CD4-positive, alpha-beta T cell (primary cell): ENCODE measurements at regions of chr1 and their contacts with region 1.

Region 1: DNA sequence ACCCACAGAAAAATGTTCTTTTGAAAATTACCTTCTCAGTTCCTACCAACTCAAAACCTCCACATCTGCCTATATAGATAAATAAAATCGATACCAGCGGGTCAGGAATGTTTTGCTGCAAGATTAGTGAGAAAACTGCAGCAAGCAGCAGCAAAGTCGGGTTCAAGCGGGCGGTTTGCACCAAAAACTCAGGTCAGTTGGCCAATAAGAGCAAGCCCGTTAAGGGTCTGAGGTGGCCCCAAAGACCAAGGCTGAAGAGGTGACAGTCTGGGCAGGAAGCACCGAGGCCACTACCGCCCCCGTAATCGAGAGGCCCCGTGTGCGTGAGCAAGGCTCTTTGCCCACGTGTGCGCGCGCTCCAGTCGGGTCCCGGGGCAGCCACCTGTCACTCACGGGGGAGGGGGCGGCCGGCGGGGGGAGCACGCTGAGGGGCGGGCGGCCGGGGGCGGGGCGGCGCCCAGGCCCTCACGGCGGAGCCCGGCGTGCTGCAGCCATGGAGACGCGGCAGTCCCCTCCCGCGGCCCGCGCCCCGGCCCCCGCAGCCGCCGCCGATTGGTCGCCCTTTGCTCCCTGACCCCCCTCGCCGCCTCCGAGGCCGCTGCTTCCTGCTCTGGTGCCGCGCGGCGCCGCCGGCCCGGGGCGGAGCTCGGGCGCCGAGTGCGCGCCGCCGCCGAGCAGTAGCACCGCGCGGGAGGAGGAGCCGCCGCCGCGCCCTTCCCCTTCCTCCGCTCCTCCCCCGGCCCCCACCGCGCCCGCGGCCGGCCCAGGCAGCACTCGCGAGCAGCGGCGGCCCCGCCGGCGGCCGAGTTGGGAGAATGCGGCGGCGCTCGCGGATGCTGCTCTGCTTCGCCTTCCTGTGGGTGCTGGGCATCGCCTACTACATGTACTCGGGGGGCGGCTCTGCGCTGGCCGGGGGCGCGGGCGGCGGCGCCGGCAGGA is at the start of gene GALNT2:
- DNase-seq: peak; percentile 74 to 97 (median 86)
- ATAC-seq: peak; percentile 91
- H3K4me3 ChIP-seq: peak within 1 kb of the TSS; percentile 85
- H3K4me3 Mint-ChIP-seq: peak within 1 kb of the TSS; percentile 97
- H3K27ac ChIP-seq: peak within 1 kb of the TSS; percentile 46 to 73
- H3K27ac Mint-ChIP-seq: peak within 1 kb of the TSS; percentile 93
- H3K4me1 ChIP-seq: peaks cover 15% of the 10 kb centered on the region
- H3K4me1 Mint-ChIP-seq: peaks cover 42% of the 10 kb centered on the region
- H3K27me3 ChIP-seq: no peaks in the 10 kb centered on the region
- H3K27me3 Mint-ChIP-seq: no peaks in the 10 kb centered on the region
- CTCF ChIP-seq: no peak
- total RNA-seq, gene GALNT2: 11.0 to 11.4 TPM

Region 2: GRCh38 chr1:229507951-229508822 is 558.5 kb before region 1 on chr1 and contains the start of gene NUP133:
- CTCF ChIA-PET with region 1: no interaction called
- POLR2A ChIA-PET with region 1: no interaction called
- intact Hi-C with region 1: loop called in 1 of 2 experiments (anchors 5 kb)
- DNase-seq: peak; percentile 96 to 100 (median 98)
- ATAC-seq: peak; percentile 97
- H3K4me3 ChIP-seq: peak within 1 kb of the TSS; percentile 98
- H3K4me3 Mint-ChIP-seq: peak within 1 kb of the TSS; percentile 97
- H3K27ac ChIP-seq: peak within 1 kb of the TSS; percentile 90 to 93
- H3K27ac Mint-ChIP-seq: peak within 1 kb of the TSS; percentile 97
- H3K4me1 ChIP-seq: peaks cover 19% of the 10 kb centered on the region
- H3K4me1 Mint-ChIP-seq: peaks cover 33% of the 10 kb centered on the region
- H3K27me3 ChIP-seq: no peaks in the 10 kb centered on the region
- H3K27me3 Mint-ChIP-seq: no peaks in the 10 kb centered on the region
- CTCF ChIP-seq: no peak
- total RNA-seq, gene NUP133: 42.0 to 45.3 TPM

Region 3: GRCh38 chr1:229558571-229559335 is 508.0 kb before region 1 on chr1 and contains the start of gene ABCB10:
- CTCF ChIA-PET with region 1: no interaction called
- POLR2A ChIA-PET with region 1: interaction called, 5 read pairs
- intact Hi-C with region 1: loop called in 1 of 2 experiments (anchors 2 kb)
- DNase-seq: peak; percentile 68 to 94 (median 84)
- ATAC-seq: peak; percentile 76
- H3K4me3 ChIP-seq: peak within 1 kb of the TSS; percentile 75
- H3K4me3 Mint-ChIP-seq: peak within 1 kb of the TSS; percentile 93
- H3K27ac ChIP-seq: peak within 1 kb of the TSS; percentile 35 to 61
- H3K27ac Mint-ChIP-seq: peak within 1 kb of the TSS; percentile 92
- H3K4me1 ChIP-seq: peaks cover 37% of the 10 kb centered on the region
- H3K4me1 Mint-ChIP-seq: peaks cover 44% of the 10 kb centered on the region
- H3K27me3 ChIP-seq: no peaks in the 10 kb centered on the region
- H3K27me3 Mint-ChIP-seq: no peaks in the 10 kb centered on the region
- CTCF ChIP-seq: peak; percentile 54
- total RNA-seq, gene ABCB10: 9.8 to 11.0 TPM

Region 4: DNA sequence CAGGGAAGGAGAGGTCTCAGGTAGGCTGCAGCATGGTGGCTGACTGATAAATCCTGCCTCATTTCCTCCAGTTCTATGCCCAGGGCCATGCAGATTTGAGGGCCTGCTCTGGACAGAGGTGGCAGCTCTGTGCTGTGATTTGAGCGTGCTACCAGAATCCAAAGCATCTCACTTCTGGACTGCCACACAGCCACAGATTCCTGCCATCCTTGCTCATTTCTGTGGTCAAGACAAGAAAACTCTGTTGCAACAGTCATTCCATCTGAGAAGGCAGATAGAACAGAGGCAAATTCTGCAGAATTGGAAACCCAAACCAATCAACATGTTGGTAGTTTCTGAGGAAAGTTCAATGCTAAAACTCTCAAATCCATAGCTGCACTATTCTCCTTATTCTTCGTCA is 102.5 kb before region 1 on chr1:
- CTCF ChIA-PET with region 1: no interaction called
- POLR2A ChIA-PET with region 1: no interaction called
- intact Hi-C with region 1: no loop called
- DNase-seq: no peak
- ATAC-seq: no peak
- H3K4me3 ChIP-seq: no peak overlapping the region
- H3K4me3 Mint-ChIP-seq: no peak overlapping the region
- H3K27ac ChIP-seq: no peak overlapping the region
- H3K27ac Mint-ChIP-seq: no peak overlapping the region
- H3K4me1 ChIP-seq: no peaks in the 10 kb centered on the region
- H3K4me1 Mint-ChIP-seq: no peaks in the 10 kb centered on the region
- H3K27me3 ChIP-seq: peaks cover 0 to 18% of the 10 kb centered on the region in 2 experiments
- H3K27me3 Mint-ChIP-seq: peaks cover 48% of the 10 kb centered on the region
- CTCF ChIP-seq: no peak

Region 5: GRCh38 chr1:230104395-230105244 is 37.9 kb after region 1 on chr1:
- CTCF ChIA-PET with region 1: no interaction called
- POLR2A ChIA-PET with region 1: no interaction called
- intact Hi-C with region 1: loop called in 1 of 2 experiments (anchors 5 kb)
- DNase-seq: peak; percentile 9 to 75 (median 42)
- ATAC-seq: peak; percentile 60
- H3K4me3 ChIP-seq: no peak overlapping the region
- H3K4me3 Mint-ChIP-seq: peak overlapping the region; percentile 23
- H3K27ac ChIP-seq: no peak overlapping the region
- H3K27ac Mint-ChIP-seq: peak overlapping the region; percentile 42
- H3K4me1 ChIP-seq: peaks cover 42% of the 10 kb centered on the region
- H3K4me1 Mint-ChIP-seq: peaks cover 84% of the 10 kb centered on the region
- H3K27me3 ChIP-seq: no peaks in the 10 kb centered on the region
- H3K27me3 Mint-ChIP-seq: no peaks in the 10 kb centered on the region
- CTCF ChIP-seq: no peak

Region 6: DNA sequence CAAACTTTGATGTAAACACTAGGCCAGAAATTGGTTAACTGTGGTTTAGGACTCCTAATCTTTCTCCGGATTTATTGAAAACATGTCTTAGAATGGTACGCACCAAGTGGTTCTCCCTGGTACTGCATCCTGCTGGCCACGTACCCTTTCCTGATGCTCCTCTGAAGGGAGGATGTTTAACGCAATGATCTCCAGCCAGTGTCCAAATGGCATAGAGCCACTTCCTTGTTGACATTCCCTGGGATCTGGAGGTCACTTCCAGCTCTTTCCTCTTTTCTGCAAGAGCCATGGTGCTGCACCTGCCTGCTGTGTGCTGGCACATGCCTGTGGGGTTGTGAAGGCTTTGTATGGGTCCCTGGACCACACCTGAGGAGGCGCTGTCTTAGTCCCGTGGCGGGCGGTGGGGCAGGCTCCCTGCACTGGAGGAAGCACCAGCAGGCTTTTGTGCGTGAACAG is 54.2 kb after region 1 on chr1:
- CTCF ChIA-PET with region 1: no interaction called
- POLR2A ChIA-PET with region 1: no interaction called
- intact Hi-C with region 1: no loop called
- DNase-seq: peak in 3 of 14 experiments; percentile 13 to 35 (median 22)
- ATAC-seq: no peak
- H3K4me3 ChIP-seq: no peak overlapping the region
- H3K4me3 Mint-ChIP-seq: no peak overlapping the region
- H3K27ac ChIP-seq: no peak overlapping the region
- H3K27ac Mint-ChIP-seq: no peak overlapping the region
- H3K4me1 ChIP-seq: peaks cover 12% of the 10 kb centered on the region
- H3K4me1 Mint-ChIP-seq: peaks cover 39% of the 10 kb centered on the region
- H3K27me3 ChIP-seq: no peaks in the 10 kb centered on the region
- H3K27me3 Mint-ChIP-seq: no peaks in the 10 kb centered on the region
- CTCF ChIP-seq: peak; percentile 41

Region 7: GRCh38 chr1:230167419-230167852 is 100.7 kb after region 1 on chr1:
- CTCF ChIA-PET with region 1: no interaction called
- POLR2A ChIA-PET with region 1: no interaction called
- intact Hi-C with region 1: loop called in 1 of 2 experiments (anchors 5 kb)
- DNase-seq: peak in 11 of 14 experiments; percentile 9 to 75 (median 14)
- ATAC-seq: peak; percentile 60
- H3K4me3 ChIP-seq: no peak overlapping the region
- H3K4me3 Mint-ChIP-seq: no peak overlapping the region
- H3K27ac ChIP-seq: no peak overlapping the region
- H3K27ac Mint-ChIP-seq: no peak overlapping the region
- H3K4me1 ChIP-seq: peaks cover 9% of the 10 kb centered on the region
- H3K4me1 Mint-ChIP-seq: peaks cover 30% of the 10 kb centered on the region
- H3K27me3 ChIP-seq: no peaks in the 10 kb centered on the region
- H3K27me3 Mint-ChIP-seq: no peaks in the 10 kb centered on the region
- CTCF ChIP-seq: peak; percentile 77

Region 8: DNA sequence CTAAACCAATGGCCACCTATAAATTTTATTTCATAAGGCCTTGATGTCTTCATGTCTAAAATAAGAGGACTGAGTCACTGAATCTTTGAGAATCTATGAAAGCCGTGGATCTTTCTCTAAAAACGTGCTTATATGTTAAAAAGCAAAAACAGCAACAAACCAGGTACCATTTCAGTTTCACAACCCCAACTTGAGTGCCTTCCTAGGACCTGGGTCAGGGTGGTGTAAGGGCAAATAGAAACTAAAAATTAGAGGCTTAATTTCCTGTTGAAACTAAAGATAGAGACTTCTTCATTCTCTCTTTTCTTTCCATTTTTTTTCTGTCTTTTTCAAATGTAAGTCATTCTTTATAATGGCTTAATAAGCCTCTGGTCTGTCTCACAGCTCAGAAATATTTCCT is 386.6 kb after region 1 on chr1:
- CTCF ChIA-PET with region 1: no interaction called
- POLR2A ChIA-PET with region 1: no interaction called
- intact Hi-C with region 1: no loop called
- DNase-seq: no peak
- ATAC-seq: no peak
- H3K4me3 ChIP-seq: no peak overlapping the region
- H3K4me3 Mint-ChIP-seq: no peak overlapping the region
- H3K27ac ChIP-seq: no peak overlapping the region
- H3K27ac Mint-ChIP-seq: no peak overlapping the region
- H3K4me1 ChIP-seq: no peaks in the 10 kb centered on the region
- H3K4me1 Mint-ChIP-seq: no peaks in the 10 kb centered on the region
- H3K27me3 ChIP-seq: peaks cover 0 to 3% of the 10 kb centered on the region in 2 experiments
- H3K27me3 Mint-ChIP-seq: peaks cover 35% of the 10 kb centered on the region
- CTCF ChIP-seq: no peak